ENCODE measurements at regions of chr2 and their contacts with region 1.

Region 1: DNA sequence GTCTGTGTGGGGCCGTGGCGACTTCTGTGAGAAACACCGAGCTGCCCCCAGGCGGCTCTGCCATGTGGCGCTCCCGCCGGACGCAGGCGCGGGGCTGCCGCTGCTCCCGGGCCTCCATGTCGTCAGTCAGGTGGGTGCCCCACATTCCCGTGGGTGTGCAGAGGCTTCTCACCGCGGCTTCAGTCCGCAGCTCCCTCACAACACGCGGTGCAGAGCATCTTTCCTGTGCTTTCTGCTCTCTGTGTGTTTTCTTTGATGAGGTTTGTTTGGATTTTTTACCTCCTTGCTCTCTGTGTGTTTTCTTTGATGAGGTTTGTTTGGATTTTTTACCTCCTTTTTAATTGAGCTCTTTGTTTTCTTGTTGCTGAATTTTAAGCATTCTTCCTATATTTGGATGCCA is 13.0 kb downstream of the AQP12A start:
- DNase-seq: peak in 2 of 3 donors; percentile 33 to 37
- ATAC-seq: no peak
- H3K4me3 ChIP-seq: no peak overlapping the region
- H3K27ac ChIP-seq: no peak overlapping the region
- H3K4me1 ChIP-seq: no peaks in the 10 kb centered on the region
- H3K27me3 ChIP-seq: no peaks in the 10 kb centered on the region

Region 2: GRCh38 chr2:240513549-240514287 is 190.9 kb before region 1 on chr2:
- intact Hi-C with region 1: loop called in 3 of 4 experiments (anchors 10 kb)
- DNase-seq: peak; percentile 85 to 95 (median 92)
- ATAC-seq: peak; percentile 90 to 93
- H3K4me3 ChIP-seq: no peak overlapping the region
- H3K27ac ChIP-seq: no peak overlapping the region
- H3K4me1 ChIP-seq: no peaks in the 10 kb centered on the region
- H3K27me3 ChIP-seq: no peaks in the 10 kb centered on the region

Region 3: DNA sequence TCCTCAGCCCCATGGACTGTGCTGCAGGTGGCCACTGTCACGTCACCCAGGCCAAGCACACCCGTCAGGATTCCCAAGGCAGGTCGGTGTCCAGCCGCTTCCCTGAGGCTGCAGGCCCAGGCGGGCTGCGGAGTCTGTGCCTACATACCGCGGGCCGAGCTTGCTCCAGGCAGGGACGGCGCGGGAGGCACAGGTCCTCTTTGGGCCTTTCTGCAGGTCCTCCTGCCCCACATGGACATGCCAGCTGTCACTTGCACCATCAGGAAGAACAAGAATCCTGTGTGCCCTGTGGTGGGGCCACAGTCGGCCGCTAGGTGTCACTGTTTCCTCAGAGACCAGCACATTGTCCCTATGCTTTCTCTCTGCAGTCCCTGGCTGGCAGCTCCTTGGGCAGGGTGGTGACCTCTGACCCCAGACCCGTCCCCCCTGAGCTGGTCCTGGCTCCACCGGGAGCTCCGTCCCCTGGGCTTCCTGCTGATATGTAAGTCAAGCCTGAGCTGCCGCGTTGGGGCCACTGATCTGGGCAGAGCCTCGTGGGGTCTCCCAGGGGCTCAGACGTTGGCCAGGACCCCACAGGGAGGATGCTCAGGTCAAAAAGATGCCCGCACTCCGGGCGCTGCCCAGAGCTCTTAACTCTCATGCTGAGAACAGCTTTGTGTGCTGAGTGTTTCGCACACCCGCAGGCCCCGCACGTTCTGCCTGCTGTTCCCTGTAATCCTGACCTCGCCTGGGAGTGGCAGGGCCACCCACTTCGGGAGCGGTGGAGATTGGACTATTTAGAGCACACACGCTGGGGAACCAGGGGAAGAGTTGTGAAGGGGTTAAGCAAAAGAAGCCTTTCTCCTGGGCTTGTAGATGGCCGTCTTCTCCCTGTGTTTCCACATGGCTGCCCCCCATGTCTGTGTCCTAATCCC is 146.7 kb after region 1 on chr2:
- intact Hi-C with region 1: no loop called
- DNase-seq: peak; percentile 83 to 95 (median 91)
- ATAC-seq: peak; percentile 90 to 92
- H3K4me3 ChIP-seq: no peak overlapping the region
- H3K27ac ChIP-seq: no peak overlapping the region
- H3K4me1 ChIP-seq: no peaks in the 10 kb centered on the region
- H3K27me3 ChIP-seq: no peaks in the 10 kb centered on the region

Region 4: DNA sequence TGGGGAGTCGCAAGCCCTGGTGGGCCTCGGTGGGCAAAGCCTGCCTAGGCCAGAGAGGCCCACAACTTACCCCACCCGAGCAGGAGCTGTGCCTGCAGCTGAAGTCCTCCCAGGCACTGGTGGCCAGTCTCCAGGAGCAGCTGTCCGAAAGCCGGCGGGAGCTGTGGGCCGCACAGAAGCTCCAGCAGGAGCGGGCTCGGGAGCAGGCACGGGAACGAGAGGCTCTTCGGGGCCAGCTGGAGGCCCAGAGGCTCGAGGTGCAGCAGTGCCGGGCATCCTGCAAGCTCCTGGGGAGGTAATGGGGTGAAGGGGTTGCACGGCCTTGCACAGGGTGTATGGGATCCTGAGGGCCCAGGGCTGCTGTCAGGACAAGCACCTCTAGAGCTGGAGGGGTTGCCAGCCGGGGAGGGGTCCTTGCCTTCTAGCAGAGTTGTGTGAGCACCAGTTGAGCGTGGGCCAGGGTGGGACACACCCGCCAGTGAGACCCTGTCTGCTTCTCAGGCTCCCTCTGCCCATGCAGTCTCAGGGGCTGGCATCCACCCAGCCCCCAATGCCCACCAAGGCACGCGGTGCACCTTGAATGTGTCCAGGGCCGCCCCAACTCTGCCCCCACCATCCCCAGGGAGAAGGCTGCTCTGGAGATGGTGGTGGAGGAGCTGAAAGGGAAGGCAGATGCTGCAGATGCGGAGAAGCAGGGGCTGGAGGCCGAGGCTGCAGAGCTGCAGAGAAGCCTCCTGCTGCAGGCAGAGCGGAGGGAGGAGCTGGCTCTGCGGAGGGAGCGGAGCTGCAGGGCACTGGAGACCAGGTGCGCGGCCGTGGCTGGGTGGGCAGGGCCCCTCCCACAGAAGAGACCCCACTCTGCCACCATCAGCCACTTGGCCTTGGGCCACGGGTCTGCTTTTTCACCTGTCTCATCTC is 228.7 kb after region 1 on chr2:
- intact Hi-C with region 1: no loop called
- DNase-seq: peak in 1 of 3 donors; percentile 52
- ATAC-seq: no peak
- H3K4me3 ChIP-seq: no peak overlapping the region
- H3K27ac ChIP-seq: no peak overlapping the region
- H3K4me1 ChIP-seq: no peaks in the 10 kb centered on the region
- H3K27me3 ChIP-seq: no peaks in the 10 kb centered on the region

Measured in right cardiac atrium (tissue), 5 donors.